ENCODE measurements at regions of chr21 and their contacts with region 1.

Region 1: DNA sequence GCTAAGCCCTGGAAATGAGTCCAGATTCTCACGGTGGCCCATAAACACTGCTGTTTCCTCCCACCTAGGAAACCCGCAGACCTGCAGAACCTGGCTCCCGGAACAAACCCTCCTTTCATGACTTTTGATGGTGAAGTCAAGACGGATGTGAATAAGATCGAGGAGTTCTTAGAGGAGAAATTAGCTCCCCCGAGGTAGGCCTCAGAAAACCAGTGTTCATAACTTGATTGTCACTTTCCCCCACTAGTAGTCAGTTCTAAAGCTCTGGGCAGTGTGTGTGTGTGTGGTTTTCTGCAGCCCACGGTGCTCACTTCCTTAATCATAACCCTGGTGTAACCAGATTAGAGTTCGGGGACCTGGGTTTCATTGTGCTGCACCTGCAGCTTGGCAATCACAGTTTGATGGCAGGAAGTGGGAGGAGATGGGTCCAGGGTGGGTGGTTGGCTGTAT is 39.1 kb downstream of the CLIC6 start:
- DNase-seq: peak; percentile 72
- ATAC-seq: peak; percentile 86
- H3K4me3 Mint-ChIP-seq: peak overlapping the region; percentile 37
- H3K27ac Mint-ChIP-seq: peak overlapping the region; percentile 75
- H3K4me1 Mint-ChIP-seq: peaks cover 31% of the 10 kb centered on the region
- H3K27me3 Mint-ChIP-seq: peaks cover 18% of the 10 kb centered on the region

Region 2: DNA sequence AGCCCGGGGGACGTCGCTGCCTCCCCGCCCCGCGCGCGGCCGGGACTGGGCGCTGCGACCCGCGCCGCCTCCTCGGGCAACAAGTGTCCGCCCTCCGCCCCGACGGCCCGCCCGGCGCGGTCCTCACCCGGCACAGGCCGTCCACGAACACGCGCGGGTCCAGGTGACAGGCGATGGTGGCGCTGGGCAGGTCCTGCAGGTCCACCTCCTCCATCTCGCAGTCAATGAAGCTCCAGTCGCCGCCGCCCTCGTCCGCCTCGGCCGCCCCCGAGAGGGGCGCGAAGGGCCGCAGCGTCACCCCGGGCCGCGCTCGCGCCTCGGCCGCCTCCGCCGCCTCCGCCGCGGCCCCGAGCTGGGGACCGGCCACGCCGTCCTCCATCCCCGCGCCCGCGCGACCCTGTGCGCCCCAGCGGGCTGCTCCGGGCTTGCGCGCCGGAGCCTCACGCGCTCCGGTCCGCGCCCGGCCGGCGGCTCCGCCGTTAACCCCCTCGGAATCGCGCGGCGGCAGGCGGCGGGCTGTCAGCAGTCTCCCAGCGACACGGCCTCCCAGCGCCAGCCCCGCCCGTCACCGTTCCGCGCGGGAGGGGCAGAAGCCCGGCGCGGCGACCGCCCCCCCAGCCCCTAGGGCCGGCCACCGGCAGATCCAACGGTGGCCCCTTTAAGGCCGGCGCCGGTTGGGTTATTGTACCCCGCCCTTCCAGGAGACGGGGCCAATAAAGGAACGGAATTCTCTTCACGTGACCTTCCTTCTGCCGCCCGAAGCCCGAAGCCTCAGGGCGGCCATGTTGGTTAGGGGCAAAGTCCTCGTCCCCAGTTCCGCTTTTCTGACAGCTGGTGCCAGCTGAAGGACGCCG is 93.0 kb before region 1 on chr21 and contains the start of gene RCAN1:
- CTCF ChIA-PET with region 1: no interaction called
- POLR2A ChIA-PET with region 1: no interaction called
- DNase-seq: peak; percentile 92
- ATAC-seq: peak; percentile 98
- H3K4me3 Mint-ChIP-seq: peak within 1 kb of the TSS; percentile 84
- H3K27ac Mint-ChIP-seq: peak within 1 kb of the TSS; percentile 87
- H3K4me1 Mint-ChIP-seq: peaks cover 22% of the 10 kb centered on the region
- H3K27me3 Mint-ChIP-seq: peaks cover 14% of the 10 kb centered on the region
- total RNA-seq, gene RCAN1: 7.8 to 8.1 TPM

Region 3: GRCh38 chr21:34722684-34723300 is 14.9 kb after region 1 on chr21:
- CTCF ChIA-PET with region 1: interaction called, 16 read pairs
- POLR2A ChIA-PET with region 1: no interaction called
- DNase-seq: peak; percentile 32
- ATAC-seq: no peak
- H3K4me3 Mint-ChIP-seq: no peak overlapping the region
- H3K27ac Mint-ChIP-seq: no peak overlapping the region
- H3K4me1 Mint-ChIP-seq: peaks cover 15% of the 10 kb centered on the region
- H3K27me3 Mint-ChIP-seq: peaks cover 18% of the 10 kb centered on the region

Measured in activated CD8-positive, alpha-beta T cell treated with anti-CD3 and anti-CD28 coated beads, Interleukin-2, amount 10 ng/mL, durations not matched to agents 7 days and 5 days (primary cell).